A673 (cell line): ENCODE measurements at regions of chr4 and their contacts with region 1.

Region 1: GRCh38 chr4:15956179-15956850 is 6.7 kb downstream of the FGFBP2 start:
- DNase-seq: peak; percentile 78
- H3K4me3 ChIP-seq: no peak overlapping the region
- H3K27ac ChIP-seq: no peak overlapping the region
- H3K4me1 ChIP-seq: no peaks in the 10 kb centered on the region
- H3K27me3 ChIP-seq: no peaks in the 10 kb centered on the region
- CTCF ChIP-seq: peak; percentile 92

Region 2: GRCh38 chr4:15729910-15730533 is 226.3 kb before region 1 on chr4:
- CTCF ChIA-PET with region 1: no interaction called
- POLR2A ChIA-PET with region 1: no interaction called
- intact Hi-C with region 1: loop called (anchors 2 kb)
- DNase-seq: peak; percentile 62
- H3K4me3 ChIP-seq: no peak overlapping the region
- H3K27ac ChIP-seq: no peak overlapping the region
- H3K4me1 ChIP-seq: no peaks in the 10 kb centered on the region
- H3K27me3 ChIP-seq: no peaks in the 10 kb centered on the region
- CTCF ChIP-seq: peak; percentile 88